PC-9 (cell line): ENCODE measurements at regions of chr16 and their contacts with region 1.

Region 1: DNA sequence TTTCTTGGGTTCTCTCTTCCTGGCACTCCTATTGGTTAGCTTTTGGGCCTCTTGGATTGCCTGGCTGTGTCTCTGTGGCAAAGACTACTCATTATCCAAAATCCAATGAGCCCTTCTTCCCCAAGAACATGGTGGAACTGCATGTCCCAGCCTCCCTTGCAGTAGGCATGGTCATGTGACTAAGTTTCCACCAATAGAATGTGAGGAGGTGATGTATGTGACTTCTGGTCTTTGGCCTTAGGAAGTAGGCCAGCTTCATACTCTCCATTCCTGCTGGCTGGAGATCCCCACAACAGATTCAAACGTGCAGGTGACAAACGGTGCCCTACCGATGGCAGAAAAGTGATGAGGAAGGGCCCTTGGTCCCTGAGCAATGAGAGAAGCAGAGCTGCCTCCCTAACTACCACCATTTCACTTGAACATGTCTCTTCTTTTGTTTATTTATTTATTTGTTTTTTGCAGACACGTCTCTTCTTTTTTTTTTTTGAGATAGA is 17.3 kb upstream of the SPN start:
- DNase-seq: no peak
- H3K4me3 ChIP-seq: no peak overlapping the region
- H3K27ac ChIP-seq: no peak overlapping the region
- H3K4me1 ChIP-seq: no peaks in the 10 kb centered on the region
- H3K27me3 ChIP-seq: no peaks in the 10 kb centered on the region
- CTCF ChIP-seq: no peak

Region 2: DNA sequence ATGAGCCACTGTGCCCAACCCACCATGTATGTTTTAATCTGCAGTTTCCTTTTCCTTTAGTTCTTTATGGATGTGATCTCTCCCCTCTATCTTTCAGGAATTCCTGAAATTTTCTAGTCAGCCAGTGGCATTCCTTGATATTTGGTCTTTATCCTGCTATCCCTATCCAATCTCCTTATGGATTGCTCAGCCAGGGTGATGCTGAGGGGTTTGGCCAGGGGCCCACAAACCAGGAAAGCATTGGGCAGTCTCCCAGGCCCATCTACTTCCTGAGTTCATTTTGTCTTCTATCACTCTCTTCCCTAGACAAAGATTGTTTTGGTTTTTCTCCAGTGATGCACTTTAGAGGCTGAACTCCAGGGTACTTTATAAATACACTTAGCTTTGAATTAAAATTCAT is 1979.9 kb before region 1 on chr16:
- CTCF ChIA-PET with region 1: no interaction called
- POLR2A ChIA-PET with region 1: no interaction called
- intact Hi-C with region 1: no loop called
- DNase-seq: no peak
- H3K4me3 ChIP-seq: no peak overlapping the region
- H3K27ac ChIP-seq: no peak overlapping the region
- H3K4me1 ChIP-seq: no peaks in the 10 kb centered on the region
- H3K27me3 ChIP-seq: no peaks in the 10 kb centered on the region
- CTCF ChIP-seq: no peak

Region 3: DNA sequence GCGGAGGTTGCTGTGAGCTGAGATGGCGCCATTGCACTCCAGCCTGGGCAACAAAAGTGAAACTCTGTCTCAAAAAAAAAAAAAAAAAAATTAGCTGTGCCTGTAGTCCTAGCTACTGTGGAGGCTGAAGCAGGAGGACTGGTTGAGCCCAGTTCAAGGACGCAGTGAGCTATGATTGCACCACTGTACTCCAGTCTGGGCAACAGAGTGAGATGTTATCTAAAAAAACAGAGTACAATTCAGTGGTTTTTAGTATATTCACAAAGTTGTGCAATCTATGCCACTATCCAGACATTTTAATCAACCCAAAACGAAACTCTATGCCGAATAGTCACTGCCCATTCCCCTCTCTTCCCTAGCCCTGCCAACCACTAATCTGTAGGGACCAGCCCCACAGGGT is 75.0 kb after region 1 on chr16:
- CTCF ChIA-PET with region 1: no interaction called
- POLR2A ChIA-PET with region 1: no interaction called
- intact Hi-C with region 1: loop called (anchors 1 kb)
- DNase-seq: no peak
- H3K4me3 ChIP-seq: no peak overlapping the region
- H3K27ac ChIP-seq: no peak overlapping the region
- H3K4me1 ChIP-seq: no peaks in the 10 kb centered on the region
- H3K27me3 ChIP-seq: no peaks in the 10 kb centered on the region
- CTCF ChIP-seq: no peak

Region 4: DNA sequence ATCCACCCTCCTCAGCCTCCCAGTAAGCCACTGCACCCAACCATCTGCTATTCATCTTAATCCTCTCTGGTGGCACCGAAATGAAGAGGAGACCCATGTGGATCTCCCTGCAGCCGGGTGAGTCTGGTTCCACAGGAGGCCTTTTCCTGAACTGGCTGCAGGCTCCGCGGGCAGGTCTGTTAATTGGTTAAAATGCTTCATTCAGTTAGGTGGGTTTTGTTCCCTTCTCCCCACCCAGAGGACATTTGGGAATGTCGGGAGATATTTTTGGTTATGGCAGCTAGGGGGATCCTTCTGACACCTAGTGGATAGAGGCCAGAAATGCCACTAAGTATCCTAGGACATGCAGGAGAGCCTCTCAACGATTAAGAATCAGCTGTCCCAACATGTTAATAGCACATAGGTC is 83.4 kb after region 1 on chr16:
- CTCF ChIA-PET with region 1: no interaction called
- POLR2A ChIA-PET with region 1: interaction called, 13 read pairs
- intact Hi-C with region 1: no loop called
- DNase-seq: peak; percentile 37 to 53
- H3K4me3 ChIP-seq: no peak overlapping the region; the same call in 1 of the 2 replicates
- H3K27ac ChIP-seq: no peak overlapping the region
- H3K4me1 ChIP-seq: no peaks in the 10 kb centered on the region
- H3K27me3 ChIP-seq: no peaks in the 10 kb centered on the region
- CTCF ChIP-seq: peak; percentile 84

Region 5: DNA sequence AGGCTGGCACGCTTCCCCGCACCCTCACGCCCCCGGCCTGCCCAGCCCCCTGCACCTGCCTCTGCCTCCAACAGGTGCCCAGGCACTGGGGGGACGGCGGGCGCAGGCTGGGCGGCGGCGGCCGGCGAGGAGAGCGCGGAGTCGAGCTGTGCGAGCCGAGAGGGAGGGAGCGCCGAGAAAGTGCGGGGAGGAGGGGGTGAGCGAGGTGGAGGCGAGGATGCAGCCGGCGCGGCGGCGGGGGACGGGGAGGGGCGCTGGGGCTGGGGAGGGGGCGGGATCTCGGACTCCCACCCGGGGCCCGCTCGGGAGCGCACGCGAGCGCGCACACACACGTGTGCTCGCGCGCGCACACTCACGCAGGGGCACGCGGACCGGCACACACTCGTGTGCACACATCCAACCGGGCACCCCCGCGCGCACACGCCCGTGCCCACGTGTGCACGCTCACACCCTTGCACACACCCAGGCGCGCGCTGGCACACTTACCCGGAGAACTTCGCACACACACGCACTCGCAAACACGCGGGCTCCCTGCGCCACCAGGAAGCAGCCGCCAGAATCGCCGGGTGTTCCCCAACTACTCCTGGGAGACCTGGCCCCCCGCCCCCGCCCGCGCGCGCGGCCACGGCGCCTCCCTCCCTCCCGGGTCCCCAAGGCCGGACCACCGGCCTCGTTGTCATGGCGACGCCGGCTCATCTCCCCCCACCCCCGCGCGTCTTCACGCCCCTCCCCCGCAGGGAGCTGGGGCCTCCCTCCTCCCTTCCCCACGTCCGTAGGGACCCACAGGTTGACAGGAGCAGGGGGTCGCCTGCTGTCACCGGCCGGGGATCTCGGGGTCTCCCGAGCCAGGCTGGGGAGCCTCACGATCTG is 365.3 kb after region 1 on chr16 and contains the start of gene DOC2A:
- CTCF ChIA-PET with region 1: no interaction called
- POLR2A ChIA-PET with region 1: interaction called, 14 read pairs
- intact Hi-C with region 1: no loop called
- DNase-seq: no peak
- H3K4me3 ChIP-seq: peak within 1 kb of the TSS; percentile 56; the same call in 1 of the 2 replicates
- H3K27ac ChIP-seq: no peak within 1 kb of the TSS
- H3K4me1 ChIP-seq: no peaks in the 10 kb centered on the region
- H3K27me3 ChIP-seq: peaks cover 16% of the 10 kb centered on the region
- CTCF ChIP-seq: no peak
- total RNA-seq, gene DOC2A: 11.0 and 11.3 TPM in 2 replicates